WTC11 (cell line): ENCODE measurements at regions of chr21 and their contacts with region 1.

Region 1: GRCh38 chr21:36661511-36662309 is 37.2 kb upstream of the SIM2 start:
- DNase-seq: peak; percentile 51
- ATAC-seq: peak; percentile 80
- H3K4me3 Mint-ChIP-seq: no peak overlapping the region
- H3K27ac Mint-ChIP-seq: no peak overlapping the region
- H3K4me1 Mint-ChIP-seq: peaks cover 7% of the 10 kb centered on the region
- H3K27me3 Mint-ChIP-seq: peaks cover 3% of the 10 kb centered on the region
- CTCF ChIP-seq: peak; percentile 41

Region 2: DNA sequence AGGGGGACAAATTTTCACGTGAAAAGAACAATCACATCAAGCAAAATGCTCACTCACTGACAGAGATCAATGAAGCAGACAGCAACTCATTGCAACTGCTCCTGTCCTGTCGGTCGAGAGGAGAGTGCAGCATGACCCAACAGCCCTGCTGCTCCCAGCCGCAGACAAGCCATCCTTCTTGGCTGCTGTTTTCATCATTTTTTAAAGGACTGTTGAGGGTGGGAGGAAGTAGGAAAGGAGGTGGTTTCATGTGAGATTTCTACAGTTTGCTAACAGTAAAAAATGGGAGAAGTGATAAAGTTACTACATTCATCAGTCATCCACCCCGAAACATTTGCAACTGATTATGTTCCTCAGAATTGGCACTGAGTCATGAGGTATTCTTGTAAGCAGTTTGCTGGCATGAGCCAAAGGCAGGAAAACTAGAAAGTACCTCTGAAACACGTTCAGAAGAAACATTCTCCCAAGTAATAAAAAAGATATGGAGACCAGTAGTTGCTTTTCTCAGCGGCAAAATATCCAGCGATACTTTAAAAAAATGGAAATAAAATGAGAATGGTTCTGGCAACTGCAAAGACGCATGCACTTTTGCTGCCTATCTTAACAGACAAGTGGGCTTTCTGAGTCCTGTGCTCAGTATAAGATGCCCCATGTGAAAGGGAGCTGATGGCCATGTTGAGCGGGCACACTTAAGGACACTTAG is 109.8 kb before region 1 on chr21:
- CTCF ChIA-PET with region 1: no interaction called
- POLR2A ChIA-PET with region 1: no interaction called
- DNase-seq: no peak
- ATAC-seq: no peak
- H3K4me3 Mint-ChIP-seq: no peak overlapping the region
- H3K27ac Mint-ChIP-seq: no peak overlapping the region
- H3K4me1 Mint-ChIP-seq: peaks cover 16% of the 10 kb centered on the region
- H3K27me3 Mint-ChIP-seq: no peaks in the 10 kb centered on the region
- CTCF ChIP-seq: no peak

Region 3: DNA sequence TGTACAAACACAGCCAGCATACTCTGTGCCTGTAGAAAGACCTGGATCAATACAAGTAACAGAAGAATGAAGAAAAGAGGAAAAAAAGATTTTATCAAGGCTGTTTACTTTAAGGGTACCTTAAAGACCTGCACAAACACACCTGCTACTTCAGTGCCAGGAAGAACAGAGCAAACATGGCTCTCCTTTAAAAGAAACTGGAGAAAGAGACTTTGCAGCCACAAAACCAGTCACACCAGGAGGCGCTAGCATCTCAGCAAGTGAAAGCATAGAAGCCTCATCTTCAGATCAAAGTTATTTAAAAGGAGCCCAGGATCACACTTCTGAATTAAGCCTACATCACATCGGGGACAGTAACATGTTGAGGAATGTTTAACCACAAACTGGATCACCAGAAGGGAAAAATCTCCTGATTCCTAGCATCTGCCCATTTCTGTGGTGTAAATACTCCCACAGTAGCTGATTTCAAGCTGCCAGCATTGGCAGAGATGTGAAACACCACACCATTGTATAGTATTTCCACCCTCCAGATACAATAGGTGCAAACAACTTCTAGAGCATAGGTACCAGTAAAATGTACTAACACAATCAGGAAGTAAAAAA is 76.7 kb before region 1 on chr21:
- CTCF ChIA-PET with region 1: no interaction called
- POLR2A ChIA-PET with region 1: no interaction called
- DNase-seq: no peak
- ATAC-seq: no peak
- H3K4me3 Mint-ChIP-seq: no peak overlapping the region
- H3K27ac Mint-ChIP-seq: no peak overlapping the region
- H3K4me1 Mint-ChIP-seq: no peaks in the 10 kb centered on the region
- H3K27me3 Mint-ChIP-seq: no peaks in the 10 kb centered on the region; the same call in 1 of the 2 replicates
- CTCF ChIP-seq: no peak

Region 4: DNA sequence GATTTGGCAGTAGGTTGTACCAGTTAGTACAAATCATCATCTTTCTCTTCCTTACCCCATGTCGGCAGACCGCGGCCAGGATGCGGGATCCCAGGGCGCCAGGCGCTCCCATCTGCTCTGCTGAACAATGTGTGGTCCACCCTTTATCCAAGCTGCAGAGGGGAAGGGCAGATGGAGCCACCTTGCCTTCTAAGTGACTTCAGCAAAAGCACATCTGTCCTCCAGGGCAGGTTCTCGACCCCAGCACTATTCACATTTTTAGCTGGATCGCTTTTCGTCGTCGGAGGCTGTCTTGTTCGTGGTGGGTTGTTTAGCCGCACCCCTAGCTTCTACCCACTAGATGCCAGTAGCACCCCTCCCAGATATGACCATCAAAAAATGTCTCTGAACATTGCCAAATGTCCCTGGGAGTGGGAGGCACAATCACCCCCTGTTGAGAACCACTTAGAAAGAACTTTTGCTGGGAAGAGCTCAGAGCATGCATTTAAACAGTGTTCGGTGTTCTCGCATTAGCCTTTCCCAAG is 20.9 kb before region 1 on chr21:
- CTCF ChIA-PET with region 1: interaction called, 3 read pairs
- POLR2A ChIA-PET with region 1: interaction called, 10 read pairs
- DNase-seq: no peak
- ATAC-seq: peak; percentile 59; the same call in 1 of the 2 replicates
- H3K4me3 Mint-ChIP-seq: no peak overlapping the region
- H3K27ac Mint-ChIP-seq: no peak overlapping the region
- H3K4me1 Mint-ChIP-seq: peaks cover 11% of the 10 kb centered on the region
- H3K27me3 Mint-ChIP-seq: no peaks in the 10 kb centered on the region
- CTCF ChIP-seq: no peak

Region 5: GRCh38 chr21:36728371-36729111 is 66.8 kb after region 1 on chr21:
- CTCF ChIA-PET with region 1: no interaction called
- POLR2A ChIA-PET with region 1: no interaction called
- DNase-seq: no peak
- ATAC-seq: no peak
- H3K4me3 Mint-ChIP-seq: no peak overlapping the region
- H3K27ac Mint-ChIP-seq: no peak overlapping the region
- H3K4me1 Mint-ChIP-seq: no peaks in the 10 kb centered on the region
- H3K27me3 Mint-ChIP-seq: no peaks in the 10 kb centered on the region; the same call in none of the 2 replicates
- CTCF ChIP-seq: no peak